ENCODE measurements at regions of chr1 and their contacts with region 1.

Region 1: GRCh38 chr1:150621497-150622302 is 7.7 kb downstream of the ENSA start:
- DNase-seq: no peak

Region 2: DNA sequence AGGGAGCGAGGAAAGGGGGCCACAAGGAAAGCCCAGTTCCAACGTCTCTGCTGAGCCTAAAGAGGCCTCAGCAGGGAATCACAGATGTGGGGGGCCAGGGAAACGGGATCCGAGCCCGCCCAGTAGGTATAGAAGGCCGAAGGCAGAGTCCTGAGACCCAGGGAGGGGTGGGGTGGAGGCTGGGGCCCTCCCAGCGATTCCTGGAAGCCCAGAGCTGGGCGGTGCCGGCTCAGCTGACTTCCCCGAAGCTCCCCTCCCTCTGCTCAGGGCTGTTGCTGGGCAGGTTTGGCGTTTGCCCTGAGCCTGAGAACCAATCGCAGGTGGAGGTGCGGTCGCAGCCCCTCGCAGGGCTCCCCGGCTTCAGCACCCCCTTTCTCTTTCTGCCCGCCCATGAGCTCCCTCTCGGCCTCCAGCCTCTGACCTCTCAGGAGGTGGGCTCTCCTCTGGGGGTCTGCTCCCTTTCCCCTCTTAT is 59.7 kb before region 1 on chr1:
- intact Hi-C with region 1: loop called in 1 of 2 experiments (anchors 5 kb)
- DNase-seq: peak; percentile 98

Region 3: DNA sequence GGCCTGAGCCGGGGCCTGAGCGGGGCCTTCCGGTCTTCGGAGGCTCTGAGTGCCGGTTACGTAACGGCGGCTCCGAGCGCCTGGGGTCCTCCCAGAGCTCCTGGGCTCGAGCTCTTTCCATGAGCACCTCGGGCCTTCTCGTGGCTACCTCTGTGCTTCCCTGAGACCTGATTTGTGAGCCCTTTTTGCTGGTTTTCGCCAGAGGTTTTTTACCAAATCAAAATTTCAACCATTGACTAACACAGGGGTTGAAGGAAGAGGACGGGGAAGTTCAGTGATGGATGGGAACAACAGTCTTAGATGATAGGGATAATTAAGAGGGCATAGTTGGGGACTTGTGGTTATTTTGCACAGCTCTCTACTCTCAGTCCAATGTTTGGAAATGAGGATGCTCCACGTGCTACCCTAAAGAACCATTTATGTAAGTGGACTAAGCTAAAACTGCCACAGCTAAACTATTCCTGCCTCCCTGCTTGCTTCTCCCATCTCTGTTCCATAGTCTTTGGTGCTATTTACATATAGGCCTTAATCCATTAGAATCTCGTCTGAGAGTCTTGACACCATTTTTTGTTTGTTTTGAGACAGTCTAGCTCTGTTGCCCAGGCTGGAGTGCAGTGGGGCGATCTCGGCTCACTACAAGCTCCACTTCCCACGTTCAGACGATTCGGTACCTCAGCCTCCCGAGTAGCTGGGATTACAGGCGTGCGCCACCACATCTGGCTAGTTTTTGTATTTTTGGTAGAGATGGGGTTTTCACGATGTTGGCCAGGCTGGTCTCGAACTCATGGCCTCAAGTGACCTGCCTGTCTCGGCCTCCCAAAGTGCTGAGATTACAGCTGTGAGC is 41.7 kb before region 1 on chr1:
- intact Hi-C with region 1: loop called in 1 of 2 experiments (anchors 5 kb)
- DNase-seq: no peak

Region 4: GRCh38 chr1:150760013-150760412 is 138.3 kb after region 1 on chr1:
- intact Hi-C with region 1: no loop called
- DNase-seq: no peak

Region 5: DNA sequence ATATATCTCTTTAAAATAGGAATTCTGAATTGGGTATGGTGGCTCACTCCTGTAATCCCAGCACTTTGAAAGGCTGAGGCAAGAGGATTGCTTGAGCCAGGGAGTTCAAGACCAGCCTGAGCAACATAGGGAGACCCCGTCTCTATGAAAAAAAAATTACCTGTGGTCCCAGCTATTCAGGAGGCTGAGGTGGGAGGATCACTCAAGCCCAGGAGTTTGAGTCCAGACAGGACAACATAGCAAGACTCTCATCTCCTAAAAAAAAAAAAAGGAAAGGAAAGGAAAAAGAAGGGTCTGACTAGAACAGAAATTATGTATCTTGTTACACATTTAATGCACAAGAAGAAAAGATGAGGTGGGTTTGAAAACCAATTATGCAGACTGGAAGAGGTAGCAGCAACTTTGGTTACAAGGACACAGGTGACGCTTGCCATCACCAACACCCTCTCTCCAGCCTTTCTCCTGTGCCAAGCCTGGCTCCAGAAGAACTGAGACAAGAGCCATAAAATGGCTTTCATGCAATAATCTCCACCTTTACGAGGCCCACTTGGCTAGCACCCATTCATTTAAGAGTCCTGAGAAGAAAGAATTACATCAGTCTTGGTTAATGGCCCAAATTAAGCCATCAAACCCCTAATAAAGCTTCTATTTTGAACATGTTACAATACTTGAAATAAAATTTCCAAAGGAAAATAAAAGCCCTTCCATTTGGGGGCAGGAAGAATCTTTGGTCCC is 755.6 kb after region 1 on chr1:
- intact Hi-C with region 1: no loop called
- DNase-seq: no peak

Measured in posterior vena cava (tissue), 2 donors.